Calu3 (cell line): ENCODE measurements at regions of chr12 and their contacts with region 1.

Region 1: GRCh38 chr12:67648521-67649260 is at the start of gene DYRK2:
- DNase-seq: peak; percentile 88
- H3K4me3 Mint-ChIP-seq: peak within 1 kb of the TSS; percentile 84
- H3K27ac Mint-ChIP-seq: peak within 1 kb of the TSS; percentile 93
- H3K4me1 Mint-ChIP-seq: peaks cover 30% of the 10 kb centered on the region
- H3K27me3 Mint-ChIP-seq: no peaks in the 10 kb centered on the region
- CTCF ChIP-seq: no peak
- total RNA-seq, gene DYRK2: 62.3 and 74.6 TPM in 2 replicates

Region 2: GRCh38 chr12:67441736-67442346 is 206.8 kb before region 1 on chr12:
- CTCF ChIA-PET with region 1: no interaction called
- intact Hi-C with region 1: loop called (anchors 5 kb)
- DNase-seq: peak; percentile 90
- H3K4me3 Mint-ChIP-seq: no peak overlapping the region
- H3K27ac Mint-ChIP-seq: no peak overlapping the region
- H3K4me1 Mint-ChIP-seq: peaks cover 6% of the 10 kb centered on the region
- H3K27me3 Mint-ChIP-seq: no peaks in the 10 kb centered on the region
- CTCF ChIP-seq: peak; percentile 78

Region 3: DNA sequence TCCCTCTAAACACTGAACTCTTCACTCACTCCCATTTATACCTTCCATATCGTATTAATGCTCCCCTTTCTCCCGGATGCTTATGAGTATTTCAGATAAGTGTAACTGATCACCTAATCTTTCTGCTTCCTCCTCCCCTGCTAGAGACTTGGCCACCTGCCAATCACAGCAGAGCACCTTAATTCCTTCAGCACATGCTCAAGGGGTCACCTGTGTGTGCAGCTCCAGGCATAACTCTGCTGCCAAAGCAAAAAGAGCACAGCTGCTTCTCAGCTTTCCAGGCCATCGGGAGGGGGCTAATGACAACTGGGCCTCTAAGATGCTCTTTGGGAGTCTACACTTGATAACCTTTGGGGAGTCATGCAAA is 107.1 kb before region 1 on chr12:
- CTCF ChIA-PET with region 1: interaction called, 3 read pairs
- intact Hi-C with region 1: loop called (anchors 5 kb)
- DNase-seq: peak; percentile 76
- H3K4me3 Mint-ChIP-seq: peak overlapping the region; percentile 9
- H3K27ac Mint-ChIP-seq: peak overlapping the region; percentile 60
- H3K4me1 Mint-ChIP-seq: peaks cover 31% of the 10 kb centered on the region
- H3K27me3 Mint-ChIP-seq: no peaks in the 10 kb centered on the region
- CTCF ChIP-seq: no peak

Region 4: DNA sequence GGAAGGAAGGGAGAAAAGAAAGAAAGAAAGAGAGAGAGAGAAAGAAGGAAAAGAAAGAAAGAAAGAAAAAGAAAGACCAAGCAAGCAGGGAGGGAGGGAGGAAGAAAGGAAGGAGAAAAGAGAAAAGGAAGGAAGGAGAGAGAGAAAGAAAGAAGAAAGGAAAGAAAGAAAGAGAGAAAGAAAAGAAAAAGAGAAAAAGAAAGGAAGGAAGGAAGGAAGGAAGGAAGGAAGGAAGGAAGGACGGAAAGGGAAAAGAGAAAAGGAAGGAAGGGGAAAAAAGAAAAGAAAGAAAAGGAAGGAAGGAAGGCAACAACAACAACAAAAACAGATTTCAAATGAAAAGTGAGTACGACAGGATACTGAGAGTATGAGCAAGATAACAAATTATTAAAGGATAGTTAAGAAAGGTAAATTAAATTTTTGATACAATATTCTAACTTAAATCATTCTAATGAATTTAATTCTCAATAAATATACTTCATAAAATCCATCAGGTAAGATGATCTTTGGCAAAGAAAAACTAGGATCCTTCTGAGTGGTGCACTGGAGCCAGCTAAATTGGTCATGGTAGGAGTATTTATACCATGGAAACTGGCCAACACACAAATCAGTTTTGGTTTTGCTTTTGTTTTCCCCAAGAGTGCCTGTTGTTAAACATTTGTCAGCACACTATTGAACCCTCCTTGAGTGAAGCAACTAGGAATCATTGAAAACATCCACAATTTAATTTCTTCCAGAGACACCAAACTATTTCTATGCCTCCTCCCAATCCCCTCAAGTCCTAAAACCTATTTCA is 56.3 kb before region 1 on chr12:
- CTCF ChIA-PET with region 1: interaction called, 13 read pairs
- intact Hi-C with region 1: no loop called
- DNase-seq: peak; percentile 45
- H3K4me3 Mint-ChIP-seq: peak overlapping the region; percentile 13
- H3K27ac Mint-ChIP-seq: peak overlapping the region; percentile 82
- H3K4me1 Mint-ChIP-seq: peaks cover 47% of the 10 kb centered on the region
- H3K27me3 Mint-ChIP-seq: no peaks in the 10 kb centered on the region
- CTCF ChIP-seq: no peak

Region 5: DNA sequence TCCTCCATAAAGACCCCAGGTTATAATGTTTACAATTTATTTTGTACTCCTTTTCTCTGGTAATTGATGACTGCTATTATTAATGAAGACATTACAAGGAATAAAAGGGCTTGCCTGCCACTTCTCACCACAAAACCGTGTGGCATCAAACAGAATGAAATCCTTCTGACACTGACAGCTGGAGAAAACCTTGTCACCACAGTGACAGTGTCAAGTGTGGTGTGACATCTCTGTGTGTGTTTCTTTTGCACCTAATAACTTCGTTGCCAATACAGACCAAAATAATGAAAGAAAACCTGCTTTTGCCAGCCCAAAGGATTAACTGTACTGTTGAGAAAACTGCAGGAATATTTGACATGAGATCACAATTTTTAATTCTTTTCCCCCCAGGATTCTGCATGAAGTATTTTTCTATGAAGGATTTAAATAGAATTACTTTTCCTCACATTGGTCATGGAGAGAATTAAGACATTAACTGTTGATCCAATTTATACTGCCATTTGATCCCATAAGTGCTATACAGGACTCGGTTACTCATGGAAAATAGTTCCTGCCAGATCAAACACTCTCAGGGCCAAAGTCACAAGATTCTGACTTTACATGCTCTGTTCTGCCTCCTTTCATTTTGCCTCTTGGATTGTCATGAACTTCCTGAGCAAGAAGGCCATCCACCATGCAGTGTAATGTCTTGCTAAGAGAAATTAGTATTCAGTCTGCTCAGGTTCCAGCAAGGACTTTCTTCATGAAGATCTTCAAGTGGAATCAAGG is 280.1 kb after region 1 on chr12:
- CTCF ChIA-PET with region 1: no interaction called
- intact Hi-C with region 1: loop called (anchors 5 kb)
- DNase-seq: no peak
- H3K4me3 Mint-ChIP-seq: no peak overlapping the region
- H3K27ac Mint-ChIP-seq: no peak overlapping the region
- H3K4me1 Mint-ChIP-seq: peaks cover 44% of the 10 kb centered on the region
- H3K27me3 Mint-ChIP-seq: no peaks in the 10 kb centered on the region
- CTCF ChIP-seq: no peak